ENCODE measurements at regions of chr4 and their contacts with region 1.

Region 1: DNA sequence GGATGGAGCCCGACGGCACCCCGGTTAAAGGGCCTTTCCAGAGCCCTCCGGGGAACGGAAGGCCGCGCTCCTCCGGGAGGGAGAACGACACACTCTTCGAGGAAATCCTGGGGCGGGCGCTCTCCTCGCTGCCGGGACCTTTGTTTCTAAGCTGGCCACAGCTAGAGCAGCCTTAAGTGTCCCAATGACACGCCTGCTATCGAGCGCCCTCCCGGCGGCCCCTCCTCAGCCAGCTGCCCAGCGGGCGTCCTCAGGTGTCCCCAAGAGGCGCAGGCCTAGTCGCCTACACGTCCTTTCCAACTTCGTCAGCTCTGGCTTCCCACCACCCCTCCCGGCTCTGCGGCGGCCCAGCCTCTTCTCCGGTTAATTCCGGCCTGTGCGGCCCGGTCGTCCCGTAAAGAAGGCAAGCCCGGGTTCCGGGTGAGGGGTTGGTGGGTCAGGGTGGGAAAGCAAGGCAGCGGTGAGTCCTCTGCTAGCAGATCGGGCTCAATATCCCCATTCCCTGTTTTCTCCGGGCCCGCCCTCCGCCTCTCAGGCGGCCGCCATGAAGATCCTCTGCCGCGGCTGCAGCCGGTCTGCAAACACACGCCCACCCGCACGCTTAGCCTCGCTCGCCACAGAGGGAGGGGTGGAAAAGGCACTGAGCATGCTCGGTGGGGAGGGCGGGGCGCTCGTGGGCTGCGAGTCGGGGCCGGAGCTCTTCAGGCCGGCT is 449 bp upstream of the RAP1GDS1 start:
- DNase-seq: peak; percentile 96
- H3K4me3 Mint-ChIP-seq: peak overlapping the region; percentile 95
- H3K27ac Mint-ChIP-seq: peak overlapping the region; percentile 97
- H3K4me1 Mint-ChIP-seq: peaks cover 43% of the 10 kb centered on the region
- H3K27me3 Mint-ChIP-seq: no peaks in the 10 kb centered on the region

Region 2: GRCh38 chr4:97994765-97995465 is 265.8 kb before region 1 on chr4:
- CTCF ChIA-PET with region 1: no interaction called
- POLR2A ChIA-PET with region 1: no interaction called
- intact Hi-C with region 1: no loop called
- DNase-seq: no peak
- H3K4me3 Mint-ChIP-seq: no peak overlapping the region
- H3K27ac Mint-ChIP-seq: no peak overlapping the region
- H3K4me1 Mint-ChIP-seq: no peaks in the 10 kb centered on the region
- H3K27me3 Mint-ChIP-seq: peaks cover 3% of the 10 kb centered on the region

Region 3: DNA sequence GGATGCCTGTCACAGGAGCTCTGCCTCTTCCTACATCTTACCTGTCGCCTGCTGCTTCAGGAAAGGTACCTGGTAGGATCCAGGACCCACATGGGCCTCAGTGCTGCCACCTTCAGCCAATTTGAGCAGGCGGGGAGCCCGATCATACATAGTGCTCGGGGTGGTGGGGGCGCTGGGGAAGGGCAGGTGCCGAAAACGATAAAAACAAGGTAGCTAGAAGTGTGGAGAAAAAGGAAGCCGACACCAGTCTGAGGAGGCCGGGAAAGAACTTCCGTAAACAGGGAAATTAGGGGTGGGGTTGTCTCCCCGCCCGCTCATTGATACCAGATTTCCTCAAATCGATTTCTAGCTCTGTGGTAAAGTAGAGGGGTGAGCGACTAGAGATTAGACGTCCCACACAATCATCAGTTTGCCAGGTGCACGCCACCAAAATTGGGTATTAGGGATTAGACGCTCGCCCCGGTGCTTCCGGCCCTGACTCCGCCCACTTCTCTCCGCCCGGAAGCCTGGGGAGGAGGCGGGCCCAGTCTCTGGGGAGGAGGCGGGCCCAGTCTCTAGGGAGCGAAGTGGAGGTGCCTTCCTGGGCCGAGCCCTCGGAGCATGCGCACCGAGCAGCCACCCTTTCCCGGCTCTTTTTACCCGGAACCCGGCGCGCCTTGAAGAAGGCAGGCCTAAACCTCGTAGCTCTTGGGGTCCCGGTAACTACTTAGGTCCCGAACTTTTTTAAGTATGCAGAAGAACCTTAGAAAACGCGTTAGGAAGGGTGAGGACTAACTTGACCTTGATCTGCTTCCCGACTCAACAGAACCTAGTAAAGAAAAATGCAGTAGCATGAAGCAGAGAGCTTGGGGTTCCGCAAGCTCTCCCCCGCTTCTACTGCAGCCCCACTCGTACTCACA is 117.5 kb before region 1 on chr4 and contains the start of gene STPG2:
- CTCF ChIA-PET with region 1: interaction called, 10 read pairs
- POLR2A ChIA-PET with region 1: interaction called, 6 read pairs
- intact Hi-C with region 1: loop called (anchors 1 kb)
- DNase-seq: peak; percentile 95
- H3K4me3 Mint-ChIP-seq: peak within 1 kb of the TSS; percentile 95
- H3K27ac Mint-ChIP-seq: peak within 1 kb of the TSS; percentile 98
- H3K4me1 Mint-ChIP-seq: peaks cover 20% of the 10 kb centered on the region
- H3K27me3 Mint-ChIP-seq: no peaks in the 10 kb centered on the region
- total RNA-seq, gene STPG2: not detected

Region 4: GRCh38 chr4:98275145-98275544 is 14.4 kb after region 1 on chr4:
- CTCF ChIA-PET with region 1: interaction called, 4 read pairs
- POLR2A ChIA-PET with region 1: no interaction called
- intact Hi-C with region 1: loop called (anchors 1 kb)
- DNase-seq: no peak
- H3K4me3 Mint-ChIP-seq: no peak overlapping the region
- H3K27ac Mint-ChIP-seq: no peak overlapping the region
- H3K4me1 Mint-ChIP-seq: peaks cover 9% of the 10 kb centered on the region
- H3K27me3 Mint-ChIP-seq: no peaks in the 10 kb centered on the region

Region 5: GRCh38 chr4:98283219-98284189 is 22.8 kb after region 1 on chr4:
- CTCF ChIA-PET with region 1: interaction called, 3 read pairs
- POLR2A ChIA-PET with region 1: interaction called, 8 read pairs
- intact Hi-C with region 1: loop called (anchors 2 kb)
- DNase-seq: no peak
- H3K4me3 Mint-ChIP-seq: no peak overlapping the region
- H3K27ac Mint-ChIP-seq: no peak overlapping the region
- H3K4me1 Mint-ChIP-seq: peaks cover 39% of the 10 kb centered on the region
- H3K27me3 Mint-ChIP-seq: no peaks in the 10 kb centered on the region

Region 6: DNA sequence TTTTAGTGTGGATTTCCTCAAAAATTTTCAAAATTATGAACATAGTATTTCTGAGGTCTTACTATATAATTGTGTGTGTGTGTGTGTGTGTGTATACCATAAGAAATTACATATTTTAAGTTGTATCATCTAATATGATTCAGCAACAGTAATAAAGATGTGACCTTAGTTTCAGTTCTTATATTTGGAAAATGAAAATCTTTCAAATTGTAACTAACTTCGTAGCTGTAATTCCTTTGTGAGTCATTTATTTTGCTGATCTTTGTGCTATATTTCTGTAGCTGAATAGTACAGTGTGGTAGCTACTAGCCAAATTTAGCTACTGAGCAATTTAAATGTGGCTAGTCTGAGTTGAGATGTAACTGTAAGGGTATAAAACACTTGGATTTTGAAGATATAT is 116.8 kb after region 1 on chr4:
- CTCF ChIA-PET with region 1: no interaction called
- POLR2A ChIA-PET with region 1: interaction called, 3 read pairs
- intact Hi-C with region 1: loop called (anchors 5 kb)
- DNase-seq: no peak
- H3K4me3 Mint-ChIP-seq: no peak overlapping the region
- H3K27ac Mint-ChIP-seq: no peak overlapping the region
- H3K4me1 Mint-ChIP-seq: peaks cover 14% of the 10 kb centered on the region
- H3K27me3 Mint-ChIP-seq: no peaks in the 10 kb centered on the region

Region 7: GRCh38 chr4:98446499-98447375 is 186.0 kb after region 1 on chr4:
- CTCF ChIA-PET with region 1: no interaction called
- POLR2A ChIA-PET with region 1: no interaction called
- intact Hi-C with region 1: loop called (anchors 1 kb)
- DNase-seq: peak; percentile 81
- H3K4me3 Mint-ChIP-seq: peak overlapping the region; percentile 48
- H3K27ac Mint-ChIP-seq: peak overlapping the region; percentile 87
- H3K4me1 Mint-ChIP-seq: peaks cover 35% of the 10 kb centered on the region
- H3K27me3 Mint-ChIP-seq: no peaks in the 10 kb centered on the region

Region 8: DNA sequence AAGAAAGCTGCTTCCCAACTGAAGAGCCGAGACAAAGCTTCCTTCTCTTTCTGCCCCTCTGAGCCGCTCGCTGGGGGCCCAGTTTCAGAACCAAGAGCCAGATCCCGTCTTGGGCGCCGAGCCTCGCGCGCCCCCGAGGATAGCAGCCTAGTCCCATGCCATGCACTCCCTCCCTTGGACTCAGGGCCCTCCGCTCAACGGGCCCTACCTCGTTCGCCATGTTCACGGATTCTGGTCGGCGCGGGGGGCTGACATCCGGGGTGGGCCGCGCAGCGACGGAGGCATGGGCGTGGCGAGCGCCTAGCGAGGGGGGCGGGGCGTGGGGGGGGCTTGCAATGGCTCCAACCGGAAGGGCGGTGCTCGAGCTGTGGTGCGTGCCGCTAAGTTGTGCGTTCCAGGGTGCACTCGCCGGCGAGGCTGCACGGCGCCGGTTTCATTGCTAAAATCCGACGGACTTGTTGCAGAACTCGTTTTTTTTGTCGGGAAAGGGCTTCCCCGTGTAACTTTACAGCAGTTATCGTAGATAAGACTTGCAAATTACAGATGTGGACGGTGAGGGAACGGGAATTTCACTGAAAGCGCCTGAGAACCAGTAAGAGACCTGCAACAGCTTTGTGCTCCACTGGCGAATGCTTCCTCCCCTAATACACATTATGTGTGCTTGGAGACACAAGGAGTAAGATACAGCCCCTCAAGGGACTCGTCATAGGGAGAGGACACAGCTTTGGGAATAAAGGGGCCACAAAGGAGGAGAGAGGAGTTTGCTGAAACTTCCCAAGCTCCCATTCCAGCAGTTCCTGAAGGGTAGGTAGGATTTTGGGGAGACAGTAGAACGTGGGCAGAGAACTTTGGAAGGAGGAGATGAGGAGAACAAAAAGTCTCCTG is 828.0 kb after region 1 on chr4 and contains the start of gene ADH5:
- CTCF ChIA-PET with region 1: no interaction called
- POLR2A ChIA-PET with region 1: no interaction called
- intact Hi-C with region 1: loop called (anchors 10 kb)
- DNase-seq: peak; percentile 95
- H3K4me3 Mint-ChIP-seq: peak within 1 kb of the TSS; percentile 96
- H3K27ac Mint-ChIP-seq: peak within 1 kb of the TSS; percentile 93
- H3K4me1 Mint-ChIP-seq: peaks cover 37% of the 10 kb centered on the region
- H3K27me3 Mint-ChIP-seq: no peaks in the 10 kb centered on the region
- total RNA-seq, gene ADH5: 112 to 119 TPM

Measured in activated CD4-positive, alpha-beta memory T cell treated with anti-CD3 and anti-CD28 coated beads for 36 hours (primary cell).